ENCODE measurements at regions of chr6 and their contacts with region 1.

Region 1: GRCh38 chr6:2853761-2854395 is 12.2 kb upstream of the SERPINB1 start:
- DNase-seq: peak; percentile 79
- ATAC-seq: peak; percentile 47
- H3K4me3 ChIP-seq: peak overlapping the region; percentile 38; the same call in 1 of the 2 replicates
- H3K27ac ChIP-seq: peak overlapping the region; percentile 81
- H3K4me1 ChIP-seq: peaks cover 51% of the 10 kb centered on the region
- H3K27me3 ChIP-seq: no peaks in the 10 kb centered on the region
- CTCF ChIP-seq: peak in 2 of 3 experiments; percentile 21 to 31; a peak in 2 of 6 replicates
- EP300 ChIP-seq: peak; percentile 65 to 83; a peak in 3 of 4 replicates
- POLR2A ChIP-seq: no peak
- RAD21 ChIP-seq: peak; percentile 15; the same call in 1 of the 2 replicates

Region 2: DNA sequence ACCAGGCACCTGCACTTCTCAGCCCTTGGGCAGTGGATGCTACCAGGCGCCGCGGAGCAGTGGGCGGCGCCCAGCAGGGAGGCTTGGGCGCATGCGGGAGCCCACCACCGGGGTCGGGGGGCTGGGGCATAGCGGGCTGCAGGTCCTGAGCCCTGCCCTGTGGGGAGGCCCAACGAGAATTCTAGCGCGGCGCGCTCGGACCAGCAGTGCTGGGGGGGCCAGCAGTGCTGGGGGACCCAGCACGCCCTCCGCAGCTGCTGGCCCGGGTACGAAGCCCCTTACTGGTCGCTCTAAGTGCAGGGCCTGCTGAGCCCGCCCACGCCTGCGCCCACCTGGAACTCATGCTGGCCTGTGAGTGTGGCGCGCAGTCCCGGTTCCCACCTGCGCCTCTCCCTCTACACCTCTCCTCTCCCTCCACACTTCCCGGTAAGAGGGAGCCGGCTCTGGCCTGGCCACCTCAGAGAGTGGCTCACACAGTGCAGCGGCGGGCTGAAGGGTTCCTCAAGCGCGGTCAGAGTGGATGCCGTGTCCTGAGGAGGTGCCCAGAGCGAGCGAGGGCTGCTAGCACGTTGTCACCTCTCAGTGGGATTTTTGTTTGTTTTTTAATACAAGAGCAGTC is 16.3 kb after region 1 on chr6:
- CTCF ChIA-PET with region 1: interaction called, 55 read pairs
- POLR2A ChIA-PET with region 1: interaction called, 108 read pairs
- RAD21 ChIA-PET with region 1: interaction called, 92 read pairs
- SMC1A ChIA-PET with region 1: interaction called, 79 read pairs
- in situ Hi-C with region 1: no loop called
- intact Hi-C with region 1: loop called (anchors 1 kb)
- DNase-seq: no peak
- ATAC-seq: no peak
- H3K4me3 ChIP-seq: no peak overlapping the region
- H3K27ac ChIP-seq: no peak overlapping the region
- H3K4me1 ChIP-seq: peaks cover 41% of the 10 kb centered on the region
- H3K27me3 ChIP-seq: no peaks in the 10 kb centered on the region
- CTCF ChIP-seq: no peak
- EP300 ChIP-seq: no peak
- POLR2A ChIP-seq: no peak
- RAD21 ChIP-seq: no peak

Region 3: DNA sequence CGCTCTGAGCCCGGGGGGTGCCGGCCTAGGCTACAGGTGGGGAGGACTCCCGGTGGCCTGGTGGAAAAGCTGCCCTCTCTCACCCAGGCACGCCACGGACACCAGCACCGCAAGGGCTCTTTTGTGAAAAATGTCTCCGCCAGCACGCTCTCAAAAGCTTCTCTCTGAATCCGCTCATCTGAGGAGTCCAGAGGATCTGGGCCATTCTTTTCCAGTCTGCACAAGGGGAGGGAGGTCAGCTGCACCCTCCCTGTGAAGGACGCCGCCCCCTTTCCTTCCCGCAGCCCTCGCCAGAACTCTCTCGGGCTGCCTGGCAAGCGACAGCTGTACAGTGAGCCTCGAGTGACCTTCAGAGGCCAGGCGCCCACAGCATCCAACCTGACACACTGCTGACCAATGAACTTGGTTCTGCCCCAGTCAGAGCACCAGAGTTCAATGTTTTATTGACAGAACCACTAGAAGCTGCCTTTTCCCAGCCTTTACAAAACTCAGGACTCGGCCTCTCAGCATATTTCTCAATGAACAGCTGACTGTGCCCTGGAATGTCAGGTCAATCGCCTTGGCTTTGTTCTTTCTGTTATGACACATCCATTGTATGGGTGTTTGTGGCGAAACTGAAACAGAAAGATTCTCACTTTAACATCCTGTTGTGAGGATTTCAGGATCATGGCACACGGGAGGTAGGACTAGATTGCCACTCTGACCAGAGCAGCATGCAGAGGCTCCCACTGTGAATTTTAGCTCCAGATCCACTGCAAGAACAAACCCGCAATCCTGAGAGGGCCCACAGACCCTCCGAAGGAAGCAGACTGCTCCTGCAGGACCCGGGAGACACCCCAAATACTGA is 22.6 kb after region 1 on chr6:
- CTCF ChIA-PET with region 1: interaction called, 8 read pairs
- POLR2A ChIA-PET with region 1: interaction called, 108 read pairs
- RAD21 ChIA-PET with region 1: interaction called, 77 read pairs
- SMC1A ChIA-PET with region 1: interaction called, 13 read pairs
- in situ Hi-C with region 1: no loop called
- intact Hi-C with region 1: loop called (anchors 1 kb)
- DNase-seq: no peak
- ATAC-seq: peak; percentile 51
- H3K4me3 ChIP-seq: 0 out of 2 replicates have a peak overlapping the region, but pooled peaks have one; percentile 18
- H3K27ac ChIP-seq: no peak overlapping the region
- H3K4me1 ChIP-seq: peaks cover 36% of the 10 kb centered on the region
- H3K27me3 ChIP-seq: no peaks in the 10 kb centered on the region
- CTCF ChIP-seq: no peak
- EP300 ChIP-seq: no peak
- POLR2A ChIP-seq: no peak; the same call in 1 of the 2 replicates
- RAD21 ChIP-seq: no peak

Region 4: GRCh38 chr6:2891768-2892170 is 37.9 kb after region 1 on chr6:
- CTCF ChIA-PET with region 1: interaction called, 37 read pairs
- POLR2A ChIA-PET with region 1: interaction called, 43 read pairs
- RAD21 ChIA-PET with region 1: interaction called, 33 read pairs
- SMC1A ChIA-PET with region 1: interaction called, 103 read pairs
- in situ Hi-C with region 1: no loop called
- intact Hi-C with region 1: no loop called
- DNase-seq: peak; percentile 89
- ATAC-seq: peak; percentile 93
- H3K4me3 ChIP-seq: peak overlapping the region; percentile 20; the same call in 1 of the 2 replicates
- H3K27ac ChIP-seq: no peak overlapping the region
- H3K4me1 ChIP-seq: peaks cover 4% of the 10 kb centered on the region; the same call in 1 of the 2 replicates
- H3K27me3 ChIP-seq: no peaks in the 10 kb centered on the region
- CTCF ChIP-seq: no peak
- EP300 ChIP-seq: peak; percentile 18 to 76; a peak in 1 of 4 replicates
- POLR2A ChIP-seq: peak; percentile 85
- RAD21 ChIP-seq: no peak

Region 5: DNA sequence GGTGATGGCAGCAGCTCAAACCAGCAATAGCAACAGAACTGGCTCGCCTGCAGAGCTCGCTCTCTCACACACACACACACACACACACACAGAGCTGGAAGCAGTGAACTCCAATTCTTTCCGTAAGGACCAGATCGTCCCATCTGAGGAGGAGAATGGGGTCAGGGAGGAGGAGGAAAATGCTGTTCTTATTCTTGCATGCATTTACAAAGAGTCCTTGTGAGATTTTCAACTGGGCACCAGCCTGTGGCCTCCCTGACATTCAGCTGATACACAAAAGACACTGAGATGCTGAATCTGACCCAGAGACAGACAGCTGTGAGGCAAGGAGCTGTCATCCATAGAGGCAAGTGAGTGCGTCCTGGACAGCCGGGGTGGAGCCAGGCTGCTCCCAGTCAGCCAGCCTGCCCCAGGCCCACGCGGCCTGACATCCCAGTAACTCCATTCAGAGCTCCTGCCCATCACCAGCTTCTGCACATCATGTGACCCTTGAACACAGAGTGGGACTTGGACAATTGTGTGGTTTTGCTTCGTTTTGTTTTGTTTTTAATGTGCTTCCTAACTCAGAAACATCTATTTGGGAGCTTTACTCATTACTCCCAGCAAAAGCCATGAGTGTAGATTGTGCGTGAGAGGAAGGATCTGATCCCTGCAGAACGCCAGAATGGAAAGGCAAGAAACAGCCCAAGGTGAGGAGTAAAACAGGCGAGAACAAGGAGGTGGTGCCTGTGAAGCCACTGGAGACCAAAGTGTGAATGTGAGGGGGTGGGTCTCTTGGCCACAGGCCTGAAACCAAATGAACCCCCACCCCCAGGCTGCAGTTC is 47.2 kb after region 1 on chr6:
- CTCF ChIA-PET with region 1: interaction called, 22 read pairs
- POLR2A ChIA-PET with region 1: interaction called, 27 read pairs
- RAD21 ChIA-PET with region 1: interaction called, 42 read pairs
- SMC1A ChIA-PET with region 1: interaction called, 103 read pairs
- in situ Hi-C with region 1: no loop called
- intact Hi-C with region 1: loop called (anchors 1 kb)
- DNase-seq: no peak
- ATAC-seq: peak; percentile 8
- H3K4me3 ChIP-seq: peak overlapping the region; percentile 57
- H3K27ac ChIP-seq: no peak overlapping the region
- H3K4me1 ChIP-seq: peaks cover 29% of the 10 kb centered on the region
- H3K27me3 ChIP-seq: no peaks in the 10 kb centered on the region; a peak in 1 of 4 replicates
- CTCF ChIP-seq: no peak
- EP300 ChIP-seq: no peak
- POLR2A ChIP-seq: 0 out of 2 replicates have a peak, but pooled peaks have one; percentile 1
- RAD21 ChIP-seq: no peak

Region 6: GRCh38 chr6:2911171-2911570 is 57.3 kb after region 1 on chr6:
- CTCF ChIA-PET with region 1: interaction called, 143 read pairs
- POLR2A ChIA-PET with region 1: interaction called, 5 read pairs
- RAD21 ChIA-PET with region 1: interaction called, 13 read pairs
- SMC1A ChIA-PET with region 1: interaction called, 136 read pairs
- in situ Hi-C with region 1: loop called (anchors 10 kb)
- intact Hi-C with region 1: no loop called
- DNase-seq: no peak
- ATAC-seq: peak; percentile 84
- H3K4me3 ChIP-seq: no peak overlapping the region
- H3K27ac ChIP-seq: no peak overlapping the region
- H3K4me1 ChIP-seq: peaks cover 13% of the 10 kb centered on the region
- H3K27me3 ChIP-seq: no peaks in the 10 kb centered on the region; a peak in 1 of 4 replicates
- CTCF ChIP-seq: no peak
- EP300 ChIP-seq: no peak
- POLR2A ChIP-seq: no peak
- RAD21 ChIP-seq: no peak

Region 7: GRCh38 chr6:2940010-2940850 is 86.4 kb after region 1 on chr6:
- CTCF ChIA-PET with region 1: interaction called, 3 read pairs
- POLR2A ChIA-PET with region 1: no interaction called
- RAD21 ChIA-PET with region 1: no interaction called
- SMC1A ChIA-PET with region 1: interaction called, 4 read pairs
- in situ Hi-C with region 1: loop called (anchors 5 kb)
- intact Hi-C with region 1: no loop called
- DNase-seq: peak; percentile 99
- ATAC-seq: peak; percentile 97
- H3K4me3 ChIP-seq: no peak overlapping the region
- H3K27ac ChIP-seq: peak overlapping the region; percentile 17; the same call in 1 of the 2 replicates
- H3K4me1 ChIP-seq: peaks cover 36% of the 10 kb centered on the region
- H3K27me3 ChIP-seq: peaks cover 0 to 6% of the 10 kb centered on the region in 2 experiments
- CTCF ChIP-seq: no peak
- EP300 ChIP-seq: peak; percentile 64 to 93
- POLR2A ChIP-seq: peak; percentile 72
- RAD21 ChIP-seq: no peak

Region 8: DNA sequence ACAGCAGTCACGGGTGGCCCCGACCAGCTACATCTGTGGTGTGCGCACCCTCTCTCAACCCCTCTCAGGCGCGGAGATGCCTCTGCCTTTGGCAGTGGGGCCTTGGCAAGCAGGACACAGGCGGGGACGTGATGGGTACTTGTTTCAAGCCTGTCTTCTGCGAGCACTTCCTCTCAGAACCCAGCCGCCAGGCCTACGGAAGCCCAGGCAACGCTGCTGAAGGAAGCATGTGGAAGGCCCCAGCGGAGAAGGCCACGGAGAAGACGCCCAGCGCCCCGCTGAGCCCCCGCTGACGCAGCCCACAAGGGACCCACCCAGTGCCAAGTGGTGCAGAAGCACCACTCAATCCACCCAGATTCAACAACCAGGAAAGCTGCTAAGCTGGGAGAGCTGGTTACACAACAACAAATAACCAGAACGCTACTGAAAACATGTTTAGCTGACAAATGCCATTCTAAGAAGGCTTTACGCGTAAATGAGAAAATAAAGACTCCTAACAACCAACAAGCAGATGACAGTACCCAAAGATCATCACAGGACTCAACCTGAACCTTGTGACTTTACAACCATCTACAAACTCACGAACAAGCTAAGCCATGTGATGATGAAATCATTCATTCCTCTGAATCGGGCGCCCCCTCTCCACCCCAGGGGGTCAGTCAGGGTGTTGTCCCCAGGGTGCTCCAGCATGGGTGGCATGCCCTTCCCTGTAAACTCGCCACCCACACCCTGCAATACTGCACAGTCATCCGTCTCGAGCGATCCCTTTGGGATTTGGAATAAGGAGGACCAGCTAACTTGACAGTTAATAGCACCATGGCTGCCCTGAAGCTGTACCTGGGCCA is 104.7 kb after region 1 on chr6:
- CTCF ChIA-PET with region 1: no interaction called
- POLR2A ChIA-PET with region 1: no interaction called
- RAD21 ChIA-PET with region 1: no interaction called
- SMC1A ChIA-PET with region 1: no interaction called
- in situ Hi-C with region 1: no loop called
- intact Hi-C with region 1: no loop called
- DNase-seq: no peak
- ATAC-seq: no peak
- H3K4me3 ChIP-seq: no peak overlapping the region
- H3K27ac ChIP-seq: no peak overlapping the region
- H3K4me1 ChIP-seq: no peaks in the 10 kb centered on the region
- H3K27me3 ChIP-seq: peaks cover 2 to 4% of the 10 kb centered on the region in 2 experiments; a peak in 3 of 4 replicates
- CTCF ChIP-seq: no peak
- EP300 ChIP-seq: no peak
- POLR2A ChIP-seq: no peak
- RAD21 ChIP-seq: no peak

Measured in GM12878 (cell line).